Activated naive CD4-positive, alpha-beta T cell treated with anti-CD3 and anti-CD28 coated beads for 36 hours (primary cell): ENCODE measurements at regions of chr2 and their contacts with region 1.

Region 1: GRCh38 chr2:190843874-190844699 is 36.5 kb upstream of the GLS start:
- DNase-seq: peak; percentile 76
- H3K4me3 Mint-ChIP-seq: peak overlapping the region; percentile 22
- H3K27ac Mint-ChIP-seq: peak overlapping the region; percentile 85
- H3K4me1 Mint-ChIP-seq: peaks cover 48% of the 10 kb centered on the region
- H3K27me3 Mint-ChIP-seq: no peaks in the 10 kb centered on the region

Region 2: DNA sequence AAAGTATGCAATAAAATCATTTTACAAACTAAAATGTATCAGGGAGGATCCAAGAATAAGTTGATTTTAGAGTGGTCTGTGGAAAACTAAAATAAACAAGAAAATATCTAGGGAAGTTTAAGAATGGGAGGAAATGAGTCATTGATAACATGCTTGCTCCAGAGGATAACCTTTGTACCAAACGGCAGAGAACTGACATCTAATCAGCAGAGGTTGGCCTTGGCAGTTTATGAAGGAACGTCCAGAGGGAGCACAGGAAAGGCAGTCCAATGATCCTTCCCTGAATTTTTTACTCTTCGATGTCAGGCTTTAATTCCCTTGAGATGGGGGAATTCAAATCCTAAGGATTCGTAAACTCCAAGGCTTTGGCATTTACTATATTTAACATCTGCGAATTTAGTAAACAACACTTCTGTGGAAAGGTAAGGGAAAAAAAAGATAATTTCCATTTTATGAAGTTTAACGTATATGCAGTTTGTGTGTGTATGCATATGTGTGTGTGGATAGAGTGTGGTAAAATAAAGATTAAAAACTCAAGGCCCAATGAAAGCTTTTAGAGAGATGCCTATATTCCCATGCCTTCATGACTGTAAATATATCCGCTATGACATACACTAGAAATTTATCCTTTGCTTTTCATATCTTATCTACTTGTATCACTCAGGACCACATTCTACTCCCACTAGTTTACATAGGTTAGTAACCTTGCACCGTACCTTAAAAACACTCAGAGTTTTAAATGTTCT is 509.4 kb before region 1 on chr2:
- CTCF ChIA-PET with region 1: no interaction called
- intact Hi-C with region 1: no loop called
- DNase-seq: no peak
- H3K4me3 Mint-ChIP-seq: no peak overlapping the region
- H3K27ac Mint-ChIP-seq: no peak overlapping the region
- H3K4me1 Mint-ChIP-seq: no peaks in the 10 kb centered on the region
- H3K27me3 Mint-ChIP-seq: peaks cover 2% of the 10 kb centered on the region

Region 3: DNA sequence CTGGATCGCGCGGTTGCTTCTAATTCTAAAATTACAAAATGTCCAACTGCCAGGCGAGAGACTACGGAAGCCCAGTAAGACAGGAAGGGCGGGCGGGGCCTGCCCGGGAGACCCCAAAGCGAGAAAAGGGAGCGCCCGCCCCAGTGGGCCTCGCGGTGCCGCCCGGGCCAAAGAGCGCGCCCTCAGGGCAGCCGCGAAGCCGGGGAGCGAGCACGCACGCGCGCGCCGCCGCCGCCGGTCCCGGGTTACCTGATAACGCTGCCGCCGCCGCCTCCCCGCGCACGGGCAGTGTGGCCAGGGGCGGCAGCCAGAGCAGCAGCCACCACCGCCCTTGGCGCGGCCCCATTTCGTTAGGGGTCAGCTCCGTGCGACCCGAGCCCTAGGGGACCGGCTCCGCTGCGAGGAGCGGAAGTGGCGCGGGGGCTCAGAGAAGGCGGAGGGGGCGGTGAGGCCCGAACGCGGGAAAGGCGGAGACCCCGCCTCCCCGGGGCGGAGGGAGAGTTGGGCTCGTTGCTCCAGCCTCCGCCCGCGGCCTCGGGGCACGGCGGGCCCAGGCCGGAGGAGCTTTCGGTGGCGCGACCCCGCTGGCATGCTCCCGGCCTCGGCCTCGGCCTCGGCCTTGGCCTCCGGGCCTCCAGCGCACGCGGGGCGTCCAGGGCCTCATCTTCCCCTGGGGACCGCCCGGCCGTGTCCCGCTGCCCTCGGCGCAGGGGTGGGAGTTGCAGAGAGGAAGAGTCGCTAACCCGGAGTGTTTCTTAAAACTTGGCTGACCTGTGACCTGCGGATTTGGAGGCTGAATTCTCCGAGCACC is 309.6 kb before region 1 on chr2 and contains the start of gene NEMP2:
- CTCF ChIA-PET with region 1: no interaction called
- intact Hi-C with region 1: loop called (anchors 1 kb)
- DNase-seq: peak; percentile 82
- H3K4me3 Mint-ChIP-seq: peak within 1 kb of the TSS; percentile 96
- H3K27ac Mint-ChIP-seq: peak within 1 kb of the TSS; percentile 100
- H3K4me1 Mint-ChIP-seq: peaks cover 51% of the 10 kb centered on the region
- H3K27me3 Mint-ChIP-seq: no peaks in the 10 kb centered on the region
- total RNA-seq, gene NEMP2: 32.9 to 34.2 TPM

Region 4: GRCh38 chr2:190571686-190572085 is 272.4 kb before region 1 on chr2:
- CTCF ChIA-PET with region 1: no interaction called
- intact Hi-C with region 1: no loop called
- DNase-seq: no peak
- H3K4me3 Mint-ChIP-seq: no peak overlapping the region
- H3K27ac Mint-ChIP-seq: no peak overlapping the region
- H3K4me1 Mint-ChIP-seq: peaks cover 27% of the 10 kb centered on the region
- H3K27me3 Mint-ChIP-seq: no peaks in the 10 kb centered on the region

Region 5: GRCh38 chr2:190763901-190764514 is 80.1 kb before region 1 on chr2:
- CTCF ChIA-PET with region 1: no interaction called
- intact Hi-C with region 1: loop called (anchors 1 kb)
- DNase-seq: peak; percentile 78
- H3K4me3 Mint-ChIP-seq: no peak overlapping the region
- H3K27ac Mint-ChIP-seq: peak overlapping the region; percentile 7
- H3K4me1 Mint-ChIP-seq: peaks cover 56% of the 10 kb centered on the region
- H3K27me3 Mint-ChIP-seq: no peaks in the 10 kb centered on the region

Region 6: GRCh38 chr2:190809876-190810525 is 34.1 kb before region 1 on chr2:
- CTCF ChIA-PET with region 1: interaction called, 3 read pairs
- intact Hi-C with region 1: loop called (anchors 1 kb)
- DNase-seq: peak; percentile 56
- H3K4me3 Mint-ChIP-seq: no peak overlapping the region
- H3K27ac Mint-ChIP-seq: no peak overlapping the region
- H3K4me1 Mint-ChIP-seq: peaks cover 30% of the 10 kb centered on the region
- H3K27me3 Mint-ChIP-seq: no peaks in the 10 kb centered on the region

Region 7: DNA sequence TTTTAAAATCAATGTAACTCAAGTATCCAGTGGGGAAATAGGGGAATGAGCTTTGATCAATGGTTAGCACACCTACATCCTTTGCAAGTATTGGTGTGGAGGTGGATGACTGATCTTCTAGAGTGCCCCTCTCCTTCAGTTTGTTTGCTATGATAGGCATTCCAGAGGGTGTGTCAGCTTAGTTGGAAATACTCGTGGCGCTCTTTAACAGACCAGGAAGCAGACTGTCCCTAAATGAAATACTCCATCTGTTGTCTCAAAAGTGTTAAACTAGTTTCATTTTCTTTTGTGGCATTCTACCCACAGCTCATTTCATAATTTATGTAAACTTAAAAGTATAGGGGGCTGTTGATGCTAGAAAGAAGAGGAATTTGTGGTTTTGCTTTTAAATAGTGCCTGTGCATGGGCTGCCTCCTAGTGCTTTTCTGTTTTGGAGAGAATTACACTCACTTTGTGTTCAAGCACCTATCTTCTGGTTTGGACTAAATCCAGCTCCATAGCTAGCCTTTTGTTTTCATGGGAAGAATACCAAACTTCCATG is 103.7 kb after region 1 on chr2:
- CTCF ChIA-PET with region 1: interaction called, 4 read pairs
- intact Hi-C with region 1: loop called (anchors 2 kb)
- DNase-seq: peak; percentile 42
- H3K4me3 Mint-ChIP-seq: no peak overlapping the region
- H3K27ac Mint-ChIP-seq: peak overlapping the region; percentile 32
- H3K4me1 Mint-ChIP-seq: peaks cover 7% of the 10 kb centered on the region
- H3K27me3 Mint-ChIP-seq: no peaks in the 10 kb centered on the region

Region 8: GRCh38 chr2:191114403-191114886 is 270.4 kb after region 1 on chr2:
- CTCF ChIA-PET with region 1: no interaction called
- intact Hi-C with region 1: loop called (anchors 1 kb)
- DNase-seq: peak; percentile 74
- H3K4me3 Mint-ChIP-seq: peak overlapping the region; percentile 57
- H3K27ac Mint-ChIP-seq: peak overlapping the region; percentile 87
- H3K4me1 Mint-ChIP-seq: peaks cover 78% of the 10 kb centered on the region
- H3K27me3 Mint-ChIP-seq: no peaks in the 10 kb centered on the region